HepG2 (cell line): ENCODE measurements at regions of chr15 and their contacts with region 1.

Region 1: DNA sequence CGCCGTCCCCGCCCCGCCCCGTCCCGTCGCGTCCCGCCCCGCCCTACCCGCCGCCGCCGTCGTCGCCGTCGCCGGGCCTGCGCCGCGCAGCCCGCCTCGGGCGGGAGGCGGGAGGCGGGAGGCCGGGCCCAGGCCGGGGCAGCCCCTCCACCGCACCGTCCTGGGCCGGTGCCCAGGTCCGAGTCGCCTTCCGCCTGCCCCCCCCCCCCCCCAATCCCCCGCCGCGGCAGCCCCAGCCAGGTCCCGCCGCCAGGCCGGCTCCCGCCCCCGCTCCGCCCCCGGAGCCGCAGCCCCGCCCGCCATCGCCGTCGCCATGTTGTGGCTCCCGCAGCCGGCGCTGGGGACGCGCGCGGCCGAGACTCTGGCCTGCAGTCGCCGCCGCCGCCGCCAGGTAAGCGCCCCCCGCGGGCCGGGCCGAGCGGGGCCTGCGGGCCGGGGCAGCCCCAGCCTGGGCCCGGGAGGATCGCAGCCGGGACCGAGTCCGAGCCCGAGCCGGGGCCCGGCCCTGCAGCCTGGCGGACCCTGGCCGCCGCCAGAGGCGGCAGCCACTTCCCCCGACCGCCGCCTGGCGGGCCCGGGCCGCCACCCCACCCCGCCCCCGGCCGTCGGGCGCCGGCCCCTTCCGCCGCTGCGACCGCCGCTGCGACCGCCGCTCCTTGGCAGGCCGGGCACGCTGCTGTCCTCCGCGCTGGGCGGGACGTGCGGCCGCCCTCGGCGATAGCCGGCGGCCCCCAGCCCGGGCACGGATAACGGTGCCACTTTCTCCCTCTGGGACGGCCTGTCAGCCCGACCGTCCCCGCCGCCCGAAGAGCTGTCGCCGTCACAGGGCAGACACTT is at the start of gene ZNF592:
- DNase-seq: peak; percentile 36
- ATAC-seq: peak; percentile 64
- H3K4me3 ChIP-seq: peak within 1 kb of the TSS; percentile 75 to 95 (median 84)
- H3K27ac ChIP-seq: peak within 1 kb of the TSS; percentile 98
- H3K4me1 ChIP-seq: peaks cover 53% of the 10 kb centered on the region
- H3K27me3 ChIP-seq: no peaks in the 10 kb centered on the region; a peak in 2 of 5 replicates
- CTCF ChIP-seq: no peak
- EP300 ChIP-seq: no peak
- POLR2A ChIP-seq: peak; percentile 23 to 41
- RAD21 ChIP-seq: peak; percentile 48; the same call in 1 of the 2 replicates
- total RNA-seq, gene ZNF592: 8.2 and 8.6 TPM in 2 replicates

Region 2: GRCh38 chr15:84699538-84700191 is 48.8 kb before region 1 on chr15:
- CTCF ChIA-PET with region 1: no interaction called
- POLR2A ChIA-PET with region 1: no interaction called
- in situ Hi-C with region 1: no loop called
- intact Hi-C with region 1: loop called (anchors 10 kb)
- DNase-seq: no peak
- ATAC-seq: no peak
- H3K4me3 ChIP-seq: no peak overlapping the region
- H3K27ac ChIP-seq: no peak overlapping the region
- H3K4me1 ChIP-seq: peaks cover 23% of the 10 kb centered on the region
- H3K27me3 ChIP-seq: no peaks in the 10 kb centered on the region
- CTCF ChIP-seq: no peak
- EP300 ChIP-seq: no peak
- POLR2A ChIP-seq: no peak
- RAD21 ChIP-seq: no peak

Region 3: GRCh38 chr15:84716036-84716799 is 32.3 kb before region 1 on chr15 and contains the start of gene SEC11A:
- CTCF ChIA-PET with region 1: no interaction called
- POLR2A ChIA-PET with region 1: interaction called, 17 read pairs
- in situ Hi-C with region 1: no loop called
- intact Hi-C with region 1: loop called (anchors 2 kb)
- DNase-seq: peak; percentile 90
- ATAC-seq: peak; percentile 98
- H3K4me3 ChIP-seq: peak within 1 kb of the TSS; percentile 72 to 89 (median 84)
- H3K27ac ChIP-seq: peak within 1 kb of the TSS; percentile 90
- H3K4me1 ChIP-seq: peaks cover 26% of the 10 kb centered on the region
- H3K27me3 ChIP-seq: no peaks in the 10 kb centered on the region; a peak in 1 of 5 replicates
- CTCF ChIP-seq: peak; percentile 23; the same call in 1 of the 2 replicates
- EP300 ChIP-seq: 0 out of 4 replicates have a peak, but pooled peaks of 1 of the 2 experiments have one; percentile 3
- POLR2A ChIP-seq: peak; percentile 79
- RAD21 ChIP-seq: peak; percentile 54; the same call in 1 of the 2 replicates
- total RNA-seq, gene SEC11A: 194 and 230 TPM in 2 replicates

Region 4: GRCh38 chr15:84818261-84819131 is 70.0 kb after region 1 on chr15:
- CTCF ChIA-PET with region 1: no interaction called
- POLR2A ChIA-PET with region 1: interaction called, 3 read pairs
- in situ Hi-C with region 1: no loop called
- intact Hi-C with region 1: loop called (anchors 10 kb)
- DNase-seq: peak; percentile 74
- ATAC-seq: peak; percentile 56
- H3K4me3 ChIP-seq: peak overlapping the region; percentile 2 to 45 (median 12); a peak in 4 of 6 replicates
- H3K27ac ChIP-seq: peak overlapping the region; percentile 28
- H3K4me1 ChIP-seq: peaks cover 59% of the 10 kb centered on the region
- H3K27me3 ChIP-seq: no peaks in the 10 kb centered on the region
- CTCF ChIP-seq: peak; percentile 34; the same call in 1 of the 2 replicates
- EP300 ChIP-seq: peak in 1 of 2 experiments; percentile 22; a peak in 1 of 4 replicates
- POLR2A ChIP-seq: no peak
- RAD21 ChIP-seq: no peak

Region 5: DNA sequence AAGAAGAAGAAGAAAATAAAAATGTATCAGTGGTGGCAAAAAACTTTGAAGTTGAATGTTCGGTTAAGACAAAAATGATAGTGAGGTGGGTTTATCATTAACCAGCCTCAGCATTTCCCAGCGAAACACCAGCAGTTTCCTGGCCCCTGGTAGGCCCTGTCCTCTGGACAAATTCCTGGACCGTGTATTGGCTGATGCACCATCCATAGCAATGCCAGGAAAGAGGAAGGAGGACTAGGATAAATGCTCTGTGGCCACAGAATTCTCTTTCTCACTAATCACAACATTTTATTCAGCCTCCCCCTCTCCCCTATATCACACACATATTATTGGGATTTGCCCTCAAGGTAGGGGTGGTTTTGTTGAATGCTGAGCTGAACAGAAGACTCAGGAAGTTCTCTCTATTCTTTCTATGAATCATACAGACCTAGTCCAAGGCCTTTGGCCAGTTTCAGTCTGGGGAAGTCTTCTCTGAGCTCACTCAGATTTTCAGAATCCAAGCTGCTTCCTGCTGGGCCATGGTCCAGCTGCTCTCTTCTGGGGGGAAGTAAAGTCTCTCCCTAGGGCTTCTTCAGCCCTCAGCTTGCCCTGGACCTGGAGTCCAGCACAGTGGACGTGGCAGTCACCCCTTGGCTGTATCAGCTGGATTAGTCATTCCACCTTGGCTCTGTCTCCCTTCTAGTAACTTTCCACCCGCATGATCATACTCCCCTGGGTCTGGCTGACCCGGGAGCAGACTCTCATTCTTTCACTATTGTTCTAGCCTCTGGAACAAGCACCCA is 163.6 kb after region 1 on chr15:
- CTCF ChIA-PET with region 1: no interaction called
- POLR2A ChIA-PET with region 1: no interaction called
- in situ Hi-C with region 1: no loop called
- intact Hi-C with region 1: loop called (anchors 5 kb)
- DNase-seq: peak; percentile 89
- ATAC-seq: peak; percentile 86
- H3K4me3 ChIP-seq: peak overlapping the region; percentile 9 to 47 (median 28); a peak in 4 of 6 replicates
- H3K27ac ChIP-seq: peak overlapping the region; percentile 97
- H3K4me1 ChIP-seq: peaks cover 100% of the 10 kb centered on the region
- H3K27me3 ChIP-seq: no peaks in the 10 kb centered on the region
- CTCF ChIP-seq: no peak
- EP300 ChIP-seq: peak in 1 of 2 experiments; percentile 77; a peak in 1 of 4 replicates
- POLR2A ChIP-seq: peak; percentile 52 to 73; a peak in 3 of 4 replicates
- RAD21 ChIP-seq: no peak